IMR-90 (cell line): ENCODE measurements at regions of chr4 and their contacts with region 1.

Region 1: DNA sequence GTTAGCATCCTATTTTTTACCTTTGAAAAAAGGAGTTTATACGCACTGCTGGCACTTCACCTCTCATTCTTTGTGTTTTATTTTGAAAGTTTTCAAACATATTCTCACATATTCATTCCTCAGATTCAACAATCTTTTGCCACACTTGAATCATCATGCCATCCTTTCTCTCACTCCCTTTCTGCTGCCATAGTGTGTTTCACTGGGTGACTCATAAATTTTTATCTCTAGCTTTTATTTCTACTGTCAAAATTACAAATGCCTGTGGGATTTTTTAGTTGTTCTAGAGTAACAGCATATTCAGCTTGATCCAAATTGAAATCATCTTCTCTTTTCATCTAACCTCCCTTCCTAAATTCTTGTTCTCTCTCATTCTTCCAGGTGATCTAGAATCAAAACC is 28.0 kb downstream of the MFSD8 start:
- DNase-seq: peak; percentile 30
- ATAC-seq: peak; percentile 59; the same call in 1 of the 2 replicates
- H3K4me3 ChIP-seq: no peak overlapping the region
- H3K27ac ChIP-seq: no peak overlapping the region
- H3K4me1 ChIP-seq: peaks cover 3% of the 10 kb centered on the region; the same call in 1 of the 2 replicates
- H3K27me3 ChIP-seq: no peaks in the 10 kb centered on the region
- CTCF ChIP-seq: no peak
- POLR2A ChIP-seq: no peak
- RAD21 ChIP-seq: no peak

Region 2: DNA sequence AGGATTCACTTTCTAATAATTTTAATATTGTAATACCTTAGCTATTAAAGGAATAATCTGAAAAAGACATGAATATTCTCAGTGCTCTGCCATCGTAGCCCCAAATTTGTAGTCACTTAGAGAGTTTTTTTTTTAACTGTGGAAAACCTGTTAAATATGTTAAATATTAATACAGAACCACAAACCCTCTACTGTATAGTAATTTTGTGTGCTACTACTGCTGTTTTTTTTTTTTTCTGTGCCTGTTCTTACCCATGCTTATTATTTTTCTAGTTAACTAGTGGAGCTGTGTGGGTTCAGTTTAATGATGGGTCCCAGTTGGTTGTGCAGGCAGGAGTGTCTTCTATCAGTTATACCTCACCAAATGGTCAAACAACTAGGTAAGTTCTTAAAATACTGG is 40.4 kb before region 1 on chr4:
- CTCF ChIA-PET with region 1: no interaction called
- POLR2A ChIA-PET with region 1: interaction called, 11 read pairs
- dilution Hi-C with region 1: no loop called
- in situ Hi-C with region 1: no loop called
- intact Hi-C with region 1: no loop called
- DNase-seq: no peak
- ATAC-seq: no peak
- H3K4me3 ChIP-seq: no peak overlapping the region
- H3K27ac ChIP-seq: no peak overlapping the region
- H3K4me1 ChIP-seq: no peaks in the 10 kb centered on the region
- H3K27me3 ChIP-seq: no peaks in the 10 kb centered on the region
- CTCF ChIP-seq: no peak
- POLR2A ChIP-seq: no peak
- RAD21 ChIP-seq: no peak

Region 3: GRCh38 chr4:128039568-128039967 is 102.6 kb after region 1 on chr4:
- CTCF ChIA-PET with region 1: no interaction called
- POLR2A ChIA-PET with region 1: no interaction called
- dilution Hi-C with region 1: no loop called
- in situ Hi-C with region 1: no loop called
- intact Hi-C with region 1: no loop called
- DNase-seq: no peak
- ATAC-seq: no peak
- H3K4me3 ChIP-seq: no peak overlapping the region
- H3K27ac ChIP-seq: no peak overlapping the region
- H3K4me1 ChIP-seq: no peaks in the 10 kb centered on the region
- H3K27me3 ChIP-seq: no peaks in the 10 kb centered on the region
- CTCF ChIP-seq: no peak
- POLR2A ChIP-seq: no peak
- RAD21 ChIP-seq: no peak